Caco-2 (cell line): ENCODE measurements at regions of chrX and their contacts with region 1.

Region 1: GRCh38 chrX:100368167-100368566 is 41.9 kb downstream of the PCDH19 start:
- DNase-seq: peak; percentile 19 to 38
- H3K4me3 ChIP-seq: no peak overlapping the region
- H3K4me3 Mint-ChIP-seq: no peak overlapping the region
- H3K27ac Mint-ChIP-seq: no peak overlapping the region
- H3K4me1 ChIP-seq: no peaks in the 10 kb centered on the region
- H3K4me1 Mint-ChIP-seq: no peaks in the 10 kb centered on the region
- H3K27me3 ChIP-seq: no peaks in the 10 kb centered on the region
- H3K27me3 Mint-ChIP-seq: no peaks in the 10 kb centered on the region
- CTCF ChIP-seq: peak; percentile 39 to 69

Region 2: GRCh38 chrX:99914635-99915034 is 453.5 kb before region 1 on chrX:
- CTCF ChIA-PET with region 1: no interaction called
- POLR2A ChIA-PET with region 1: no interaction called
- intact Hi-C with region 1: no loop called
- DNase-seq: no peak
- H3K4me3 ChIP-seq: no peak overlapping the region
- H3K4me3 Mint-ChIP-seq: no peak overlapping the region
- H3K27ac Mint-ChIP-seq: no peak overlapping the region
- H3K4me1 ChIP-seq: 0 out of 2 replicates have a peak, but pooled peaks cover 3% of the 10 kb centered on the region
- H3K4me1 Mint-ChIP-seq: no peaks in the 10 kb centered on the region
- H3K27me3 ChIP-seq: no peaks in the 10 kb centered on the region
- H3K27me3 Mint-ChIP-seq: no peaks in the 10 kb centered on the region
- CTCF ChIP-seq: no peak

Region 3: GRCh38 chrX:100379388-100379986 is 11.3 kb after region 1 on chrX:
- CTCF ChIA-PET with region 1: interaction called, 15 read pairs
- POLR2A ChIA-PET with region 1: no interaction called
- intact Hi-C with region 1: loop called (anchors 1 kb)
- DNase-seq: peak in 1 of 2 experiments; percentile 4
- H3K4me3 ChIP-seq: no peak overlapping the region
- H3K4me3 Mint-ChIP-seq: no peak overlapping the region
- H3K27ac Mint-ChIP-seq: no peak overlapping the region
- H3K4me1 ChIP-seq: no peaks in the 10 kb centered on the region
- H3K4me1 Mint-ChIP-seq: no peaks in the 10 kb centered on the region
- H3K27me3 ChIP-seq: no peaks in the 10 kb centered on the region
- H3K27me3 Mint-ChIP-seq: no peaks in the 10 kb centered on the region
- CTCF ChIP-seq: peak; percentile 40 to 61

Region 4: DNA sequence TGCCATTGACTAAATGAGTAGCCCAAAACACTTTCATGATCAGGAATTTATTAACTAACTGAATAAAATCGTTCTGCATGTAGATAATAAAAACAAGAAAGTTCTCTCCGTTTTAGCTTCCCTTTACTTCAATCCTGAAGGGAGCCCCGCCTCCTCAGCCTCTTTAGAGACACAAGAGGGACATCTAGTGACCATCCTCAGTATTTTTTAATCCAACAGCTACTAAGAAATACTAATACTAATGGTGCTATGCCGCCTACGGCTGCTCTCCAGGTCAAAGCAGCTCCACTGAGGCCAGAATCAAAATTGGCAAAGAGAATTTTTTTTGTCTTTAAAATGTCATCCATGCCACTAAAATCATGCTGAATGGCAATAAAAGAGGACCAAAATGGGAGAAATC is 45.1 kb after region 1 on chrX:
- CTCF ChIA-PET with region 1: interaction called, 42 read pairs
- POLR2A ChIA-PET with region 1: no interaction called
- intact Hi-C with region 1: loop called (anchors 1 kb)
- DNase-seq: peak in 1 of 2 experiments; percentile 55
- H3K4me3 ChIP-seq: no peak overlapping the region
- H3K4me3 Mint-ChIP-seq: no peak overlapping the region
- H3K27ac Mint-ChIP-seq: no peak overlapping the region
- H3K4me1 ChIP-seq: no peaks in the 10 kb centered on the region
- H3K4me1 Mint-ChIP-seq: peaks cover 5% of the 10 kb centered on the region
- H3K27me3 ChIP-seq: no peaks in the 10 kb centered on the region; the same call in 1 of the 2 replicates
- H3K27me3 Mint-ChIP-seq: peaks cover 14% of the 10 kb centered on the region
- CTCF ChIP-seq: no peak